Activated CD4-positive, alpha-beta T cell treated with anti-CD3 and anti-CD28 coated beads, Interleukin-2, amount 10 ng/mL, durations not matched to agents 7 days and 5 days (primary cell): ENCODE measurements at regions of chr18 and their contacts with region 1.

Region 1: DNA sequence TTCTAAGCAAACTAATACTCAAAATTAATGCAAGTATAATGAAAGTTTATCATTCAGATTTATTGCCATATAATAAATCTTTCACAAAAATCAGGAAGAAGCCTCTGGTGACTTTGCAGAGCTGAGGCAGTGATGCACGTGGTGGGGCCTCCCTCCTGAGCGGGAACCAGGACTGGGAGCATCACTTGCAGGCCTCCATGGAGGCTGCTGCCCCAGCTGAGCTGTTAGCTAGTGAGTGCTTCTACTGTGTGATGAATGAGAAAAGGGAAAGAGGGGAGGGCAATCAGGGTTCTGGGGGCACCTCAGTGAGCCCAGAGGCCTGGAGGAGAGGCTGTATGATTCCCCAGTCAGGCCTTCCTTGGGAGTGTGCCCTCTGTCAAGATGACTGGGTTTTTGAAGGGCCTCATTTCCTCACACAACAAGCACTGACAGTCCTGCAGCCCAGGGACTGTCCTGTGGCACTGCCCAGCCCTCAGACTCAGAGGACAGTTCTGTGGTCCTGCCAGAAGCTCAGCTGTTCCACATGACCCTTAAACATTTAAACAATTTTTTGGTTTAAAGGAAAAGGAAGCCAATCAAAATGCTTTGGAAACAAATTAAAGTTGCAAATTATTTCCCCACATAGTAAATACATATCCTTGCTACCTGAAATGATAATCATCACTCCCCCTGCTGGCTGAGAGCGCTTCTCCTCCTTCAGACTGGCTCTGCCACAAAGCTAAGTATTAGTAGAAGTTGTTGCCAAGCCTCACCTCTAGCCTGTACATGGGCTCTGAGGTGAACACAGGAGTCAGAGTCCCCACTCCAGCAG is 90.9 kb upstream of the SMAD7 start:
- DNase-seq: peak; percentile 71
- H3K4me3 Mint-ChIP-seq: no peak overlapping the region
- H3K27ac Mint-ChIP-seq: peak overlapping the region; percentile 56
- H3K4me1 Mint-ChIP-seq: peaks cover 13% of the 10 kb centered on the region
- H3K27me3 Mint-ChIP-seq: no peaks in the 10 kb centered on the region

Region 2: DNA sequence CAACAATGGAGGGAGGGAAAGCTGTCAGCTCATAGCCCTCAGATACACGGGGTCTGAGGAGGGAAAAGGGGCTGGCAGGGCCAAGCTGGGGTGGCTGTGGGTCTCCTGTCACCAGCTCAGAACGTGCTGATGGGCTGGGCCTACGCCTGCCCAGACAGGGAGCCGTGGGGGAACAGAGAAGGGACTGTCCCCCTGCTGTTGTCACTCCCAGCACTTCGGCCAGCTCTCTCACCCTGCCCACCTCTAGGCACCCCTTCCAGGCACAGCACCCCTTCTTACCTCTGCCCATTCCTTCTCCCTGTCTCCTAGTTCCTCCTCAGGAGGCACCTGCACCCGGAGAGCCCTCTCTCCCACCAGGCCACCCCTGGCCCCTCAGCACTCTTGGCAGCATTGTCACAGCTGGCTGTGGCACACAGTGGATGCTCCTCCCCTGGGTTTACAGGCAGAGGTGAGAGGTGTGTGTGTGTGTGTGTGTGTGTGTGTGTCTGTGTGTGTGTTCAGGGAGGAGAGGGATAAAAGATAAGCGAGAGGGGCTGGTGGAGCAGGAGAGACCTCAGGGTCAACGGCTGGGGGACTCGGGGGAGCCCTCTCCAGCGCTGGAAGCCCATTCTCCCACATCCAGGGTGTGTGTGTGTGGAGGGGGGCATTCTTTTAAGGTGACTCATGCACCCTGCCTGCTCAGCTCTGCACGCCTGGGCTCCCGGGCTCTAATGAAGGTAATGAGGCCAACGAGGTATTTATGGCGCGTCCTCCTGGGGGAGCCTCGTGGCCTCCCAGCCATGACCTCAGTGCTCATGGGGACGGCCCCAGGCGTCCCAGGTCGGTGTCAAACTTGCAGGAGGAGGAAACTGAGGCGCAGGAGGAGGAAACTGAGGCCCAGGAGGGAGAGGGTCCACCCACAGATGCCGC is 24.8 kb before region 1 on chr18:
- CTCF ChIA-PET with region 1: no interaction called
- POLR2A ChIA-PET with region 1: no interaction called
- DNase-seq: no peak
- H3K4me3 Mint-ChIP-seq: no peak overlapping the region
- H3K27ac Mint-ChIP-seq: no peak overlapping the region
- H3K4me1 Mint-ChIP-seq: no peaks in the 10 kb centered on the region
- H3K27me3 Mint-ChIP-seq: no peaks in the 10 kb centered on the region

Region 3: GRCh38 chr18:49055754-49056172 is 14.1 kb after region 1 on chr18:
- CTCF ChIA-PET with region 1: interaction called, 32 read pairs
- POLR2A ChIA-PET with region 1: no interaction called
- DNase-seq: peak; percentile 16
- H3K4me3 Mint-ChIP-seq: no peak overlapping the region
- H3K27ac Mint-ChIP-seq: no peak overlapping the region
- H3K4me1 Mint-ChIP-seq: peaks cover 36% of the 10 kb centered on the region
- H3K27me3 Mint-ChIP-seq: no peaks in the 10 kb centered on the region